Activated CD8-positive, alpha-beta T cell treated with anti-CD3 and anti-CD28 coated beads for 36 hours (primary cell): ENCODE measurements at regions of chr1 and their contacts with region 1.

Region 1: DNA sequence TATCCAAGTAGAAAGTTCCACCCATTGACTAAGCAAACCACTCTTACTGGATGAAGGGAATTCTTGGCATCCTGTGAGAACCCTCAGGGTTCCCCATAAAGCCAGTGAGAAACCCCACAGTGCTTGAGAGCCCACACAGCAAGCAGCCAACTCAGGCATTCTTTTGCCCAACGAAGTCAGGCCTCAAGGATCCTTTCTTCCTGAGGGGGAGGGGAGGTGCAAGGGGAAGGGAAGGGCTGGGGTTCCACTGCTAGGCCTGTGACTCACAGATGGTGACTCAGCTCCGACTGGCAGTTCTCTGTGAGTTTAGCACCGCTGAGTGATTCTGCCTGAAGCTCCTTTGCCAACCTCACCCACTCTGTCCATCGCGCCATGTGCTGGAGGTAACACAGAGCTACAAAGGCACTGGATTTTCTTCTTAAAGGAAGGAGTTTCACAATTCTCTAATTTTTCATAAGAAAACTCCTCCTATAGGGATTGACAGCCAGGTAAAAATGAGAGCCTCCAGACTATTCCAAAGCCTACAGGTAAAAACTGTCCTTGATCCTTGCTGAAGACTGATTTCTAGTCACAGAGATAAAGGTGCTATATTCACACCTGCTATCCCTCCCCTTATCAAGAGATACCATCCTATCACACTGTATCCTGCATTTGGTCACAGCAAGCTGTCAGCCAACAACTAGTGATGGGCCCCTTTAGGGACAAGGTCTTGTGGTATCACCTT is 4.8 kb downstream of the ENO1 start:
- DNase-seq: peak; percentile 92
- ATAC-seq: peak; percentile 52
- H3K4me3 Mint-ChIP-seq: peak overlapping the region; percentile 88
- H3K27ac Mint-ChIP-seq: peak overlapping the region; percentile 100
- H3K4me1 Mint-ChIP-seq: peaks cover 62% of the 10 kb centered on the region
- H3K27me3 Mint-ChIP-seq: no peaks in the 10 kb centered on the region
- CTCF ChIP-seq: no peak

Region 2: GRCh38 chr1:8858888-8859706 is 14.6 kb before region 1 on chr1:
- CTCF ChIA-PET with region 1: interaction called, 35 read pairs
- POLR2A ChIA-PET with region 1: interaction called, 197 read pairs
- intact Hi-C with region 1: no loop called
- DNase-seq: peak; percentile 74
- ATAC-seq: peak; percentile 54
- H3K4me3 Mint-ChIP-seq: no peak overlapping the region
- H3K27ac Mint-ChIP-seq: peak overlapping the region; percentile 75
- H3K4me1 Mint-ChIP-seq: peaks cover 34% of the 10 kb centered on the region
- H3K27me3 Mint-ChIP-seq: no peaks in the 10 kb centered on the region
- CTCF ChIP-seq: peak; percentile 68

Region 3: DNA sequence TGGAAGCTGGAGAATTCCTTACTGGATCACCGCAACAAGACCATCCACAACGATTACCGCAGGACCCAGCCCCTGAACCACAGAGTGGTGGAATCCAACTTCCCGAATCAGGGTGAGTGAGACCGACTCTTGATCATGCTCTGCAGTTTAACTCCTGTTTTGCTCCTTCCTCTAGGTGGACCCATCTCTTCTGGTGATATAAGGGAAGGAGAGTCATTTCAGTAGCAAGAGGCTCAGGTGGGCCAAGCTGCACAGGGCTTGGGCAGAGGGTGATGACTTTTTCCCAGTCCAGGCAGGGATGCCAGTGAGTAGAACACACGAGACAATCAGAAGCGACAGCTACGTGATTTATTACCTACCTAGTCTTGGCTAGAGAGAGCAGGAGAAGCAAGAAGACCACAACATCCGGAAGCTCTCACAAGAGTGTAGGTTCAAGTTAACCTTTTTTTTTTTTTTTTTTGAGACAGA is 97.2 kb after region 1 on chr1:
- CTCF ChIA-PET with region 1: no interaction called
- POLR2A ChIA-PET with region 1: interaction called, 71 read pairs
- intact Hi-C with region 1: no loop called
- DNase-seq: peak; percentile 85
- ATAC-seq: peak; percentile 83
- H3K4me3 Mint-ChIP-seq: peak overlapping the region; percentile 93
- H3K27ac Mint-ChIP-seq: peak overlapping the region; percentile 100
- H3K4me1 Mint-ChIP-seq: peaks cover 40% of the 10 kb centered on the region
- H3K27me3 Mint-ChIP-seq: no peaks in the 10 kb centered on the region
- CTCF ChIP-seq: no peak

Region 4: DNA sequence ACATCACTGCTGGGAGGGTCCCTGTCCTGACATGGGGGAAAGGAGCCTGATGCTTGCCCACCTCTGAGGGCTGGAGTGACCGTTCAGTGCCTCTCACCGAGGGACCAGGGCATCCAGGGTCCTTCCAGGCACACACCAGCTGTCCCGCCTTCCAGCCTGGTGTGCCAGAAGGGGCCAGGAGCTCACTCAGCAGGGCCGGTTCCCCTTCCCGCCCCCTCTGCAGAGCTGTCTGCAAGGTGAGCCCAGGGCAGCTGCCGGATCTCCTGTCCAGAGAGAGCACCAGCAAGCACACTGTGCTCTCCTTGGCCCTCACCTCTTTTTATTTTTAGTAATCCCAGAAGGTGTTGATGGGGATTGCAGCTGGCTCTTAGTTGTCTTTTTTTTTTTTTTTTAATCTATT is 377.8 kb after region 1 on chr1:
- CTCF ChIA-PET with region 1: no interaction called
- POLR2A ChIA-PET with region 1: no interaction called
- intact Hi-C with region 1: no loop called
- DNase-seq: no peak
- ATAC-seq: no peak
- H3K4me3 Mint-ChIP-seq: no peak overlapping the region
- H3K27ac Mint-ChIP-seq: no peak overlapping the region
- H3K4me1 Mint-ChIP-seq: no peaks in the 10 kb centered on the region
- H3K27me3 Mint-ChIP-seq: no peaks in the 10 kb centered on the region
- CTCF ChIP-seq: no peak